Dendritic cell treated with granulocyte-macrophage colony-stimulating factor and Interleukin-4, amounts not matched to agents 40 ng/mL and 50 ng/mL, for 4 days (primary cell): ENCODE measurements at regions of chr22 and their contacts with region 1.

Region 1: DNA sequence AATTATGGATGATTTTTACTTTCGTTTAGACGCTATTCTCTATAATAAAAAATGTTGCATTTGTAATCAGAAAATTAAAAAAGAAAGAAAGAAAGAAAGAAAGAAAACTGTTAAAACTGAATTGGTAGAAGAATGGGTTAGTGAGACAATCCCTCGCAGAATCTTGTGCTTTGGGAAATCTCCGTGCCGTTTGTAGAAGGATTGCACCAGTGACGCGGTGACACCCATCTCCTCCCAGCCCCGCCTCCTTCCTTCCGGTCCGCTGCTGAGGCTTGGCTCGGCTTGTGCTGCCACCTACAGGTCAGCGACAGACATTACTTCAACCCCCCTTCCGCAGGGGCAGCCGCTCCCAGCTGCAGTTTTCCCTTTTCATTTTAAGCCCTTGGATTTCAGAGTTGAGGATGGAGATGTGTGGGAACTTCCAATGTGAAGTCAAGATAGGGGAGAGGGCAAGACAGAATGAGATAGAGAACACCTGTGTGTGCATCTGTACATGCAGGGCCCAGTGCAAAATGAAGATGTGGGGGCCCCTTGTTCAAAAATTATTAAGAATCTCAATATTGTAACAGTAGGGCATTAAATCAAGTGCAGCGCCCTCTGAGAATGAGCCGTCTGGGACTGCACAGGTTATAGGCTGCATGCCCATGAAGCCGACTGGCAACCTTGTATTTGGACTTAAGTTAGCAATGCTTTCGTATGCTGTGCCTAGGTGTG is 41.1 kb downstream of the TST start:
- H3K4me3 Mint-ChIP-seq: peak overlapping the region; percentile 74
- H3K27ac Mint-ChIP-seq: peak overlapping the region; percentile 87
- H3K4me1 Mint-ChIP-seq: peaks cover 29% of the 10 kb centered on the region
- H3K27me3 Mint-ChIP-seq: peaks cover 26% of the 10 kb centered on the region

Region 2: DNA sequence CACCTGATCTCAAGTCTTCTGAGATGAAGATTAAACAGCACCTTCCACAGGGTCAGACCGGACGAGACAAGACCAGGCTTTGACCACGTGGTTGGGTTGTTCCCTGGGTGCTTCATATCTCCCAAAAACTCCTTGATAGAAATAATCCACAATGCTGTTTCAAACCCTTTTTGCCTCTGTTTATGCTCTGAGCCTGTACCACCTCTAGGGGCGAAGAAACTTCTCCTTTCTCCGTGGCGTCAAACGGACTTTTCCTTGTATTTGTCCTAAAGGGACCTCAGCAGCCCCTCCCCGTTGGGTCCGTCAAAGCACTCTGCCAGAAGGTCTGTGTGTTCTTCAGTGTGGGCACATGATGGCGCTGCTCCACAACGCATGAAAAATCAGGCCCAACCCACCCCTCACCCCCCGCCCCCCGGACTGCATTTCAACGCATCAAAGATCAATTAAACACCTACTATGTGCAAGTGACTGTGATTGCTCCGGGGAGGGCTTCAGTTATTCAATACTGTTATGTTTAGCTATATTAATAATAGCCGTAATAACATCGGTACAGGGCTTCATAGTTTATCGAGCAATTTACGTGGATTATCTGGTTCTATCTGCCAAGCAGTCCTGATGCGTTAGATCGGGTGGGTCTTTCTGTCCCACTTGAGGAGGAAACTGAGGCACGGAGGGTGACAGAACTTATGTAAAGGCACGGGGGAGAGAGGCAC is 431.9 kb before region 1 on chr22:
- intact Hi-C with region 1: loop called (anchors 5 kb)
- H3K4me3 Mint-ChIP-seq: no peak overlapping the region
- H3K27ac Mint-ChIP-seq: no peak overlapping the region
- H3K4me1 Mint-ChIP-seq: peaks cover 23% of the 10 kb centered on the region
- H3K27me3 Mint-ChIP-seq: peaks cover 22% of the 10 kb centered on the region

Region 3: GRCh38 chr22:36913427-36914389 is 64.4 kb before region 1 on chr22 and contains the start of gene CSF2RB:
- intact Hi-C with region 1: loop called (anchors 5 kb)
- H3K4me3 Mint-ChIP-seq: peak within 1 kb of the TSS; percentile 92
- H3K27ac Mint-ChIP-seq: peak within 1 kb of the TSS; percentile 93
- H3K4me1 Mint-ChIP-seq: peaks cover 63% of the 10 kb centered on the region
- H3K27me3 Mint-ChIP-seq: no peaks in the 10 kb centered on the region

Region 4: DNA sequence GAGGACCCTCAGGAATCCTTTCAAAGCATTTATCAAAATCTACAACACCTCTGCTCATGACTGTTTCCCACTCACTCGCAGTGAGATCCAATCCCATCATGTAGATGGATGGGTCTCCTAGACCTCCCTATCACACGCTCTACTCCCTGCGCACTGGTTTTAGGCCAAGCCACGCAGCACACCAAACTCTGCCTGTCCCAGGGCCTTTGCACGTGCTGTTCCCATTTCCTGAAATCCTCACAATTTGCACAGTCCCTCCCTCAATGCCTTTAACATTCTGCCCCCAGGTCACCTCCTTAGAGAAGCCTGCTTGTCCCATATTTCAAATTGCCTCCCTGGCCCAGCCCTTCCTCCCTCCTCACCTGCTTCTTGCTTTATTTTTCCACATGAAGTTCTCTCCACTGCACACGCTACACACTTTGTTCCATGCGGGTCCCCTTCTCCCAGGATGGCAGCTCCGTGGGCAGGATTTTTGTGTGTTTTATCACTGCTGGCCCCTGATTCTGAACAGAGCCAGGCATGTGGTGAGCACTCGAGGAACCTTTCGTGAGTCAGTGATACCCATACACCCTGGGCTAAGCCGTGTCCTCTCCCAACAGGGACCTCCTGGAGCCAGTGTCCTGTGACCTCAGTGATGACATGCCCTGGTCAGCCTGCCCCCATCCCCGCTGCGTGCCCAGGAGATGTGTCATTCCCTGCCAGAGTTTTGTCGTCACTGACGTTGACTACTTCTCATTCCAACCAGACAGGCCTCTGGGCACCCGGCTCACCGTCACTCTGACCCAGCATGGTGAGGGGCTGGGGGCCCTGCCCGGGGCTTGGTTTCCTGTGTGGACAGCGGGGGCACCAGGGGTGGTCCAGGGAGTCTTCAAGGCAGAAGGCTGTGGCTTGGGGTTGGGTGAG is 52.5 kb before region 1 on chr22:
- intact Hi-C with region 1: no loop called
- H3K4me3 Mint-ChIP-seq: no peak overlapping the region
- H3K27ac Mint-ChIP-seq: peak overlapping the region; percentile 16
- H3K4me1 Mint-ChIP-seq: peaks cover 66% of the 10 kb centered on the region
- H3K27me3 Mint-ChIP-seq: no peaks in the 10 kb centered on the region